GM12878 (cell line): ENCODE measurements at regions of chr12 and their contacts with region 1.

Region 1: DNA sequence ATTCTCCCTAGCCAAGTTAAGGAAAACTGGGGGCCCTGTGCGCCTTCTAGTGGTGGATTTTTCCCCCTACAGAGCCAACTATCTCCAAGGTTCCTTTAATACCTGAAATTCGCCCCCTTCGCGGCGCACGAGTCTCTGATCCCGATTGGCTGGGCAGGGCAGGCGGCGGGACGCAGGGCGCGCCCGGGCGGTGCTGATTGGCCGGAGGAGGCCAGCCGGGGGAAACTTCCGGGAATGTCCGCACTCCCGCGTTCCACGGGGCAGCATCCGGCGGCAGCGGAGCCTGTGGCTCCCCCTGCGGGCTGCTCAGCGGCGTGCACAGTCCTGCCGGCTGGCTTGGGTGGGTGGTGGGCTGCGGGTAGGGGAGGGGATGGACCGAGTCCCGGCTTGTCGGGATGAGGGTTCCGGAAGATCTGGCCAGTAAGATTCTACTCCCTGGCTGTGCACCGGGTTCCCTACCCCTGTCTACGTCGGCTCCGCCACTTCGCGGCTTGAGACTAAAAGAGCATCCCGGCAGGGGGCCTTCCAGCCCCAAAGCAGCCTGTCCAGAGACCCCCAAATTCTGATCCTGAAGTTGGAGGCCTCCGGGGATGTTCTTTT is at the start of gene NABP2:
- DNase-seq: peak; percentile 89
- ATAC-seq: peak; percentile 90
- H3K4me3 ChIP-seq: peak within 1 kb of the TSS; percentile 97
- H3K27ac ChIP-seq: peak within 1 kb of the TSS; percentile 65
- H3K4me1 ChIP-seq: 0 out of 2 replicates have a peak, but pooled peaks cover 3% of the 10 kb centered on the region
- H3K27me3 ChIP-seq: no peaks in the 10 kb centered on the region
- CTCF ChIP-seq: peak; percentile 65 to 86 (median 85)
- EP300 ChIP-seq: 0 out of 4 replicates have a peak, but pooled peaks of 1 of the 2 experiments have one; percentile 7
- POLR2A ChIP-seq: peak; percentile 78
- RAD21 ChIP-seq: peak; percentile 49; the same call in 1 of the 2 replicates
- polyA plus RNA-seq, gene NABP2: 20.7 to 29.5 TPM

Region 2: GRCh38 chr12:56206457-56207166 is 17.6 kb before region 1 on chr12:
- CTCF ChIA-PET with region 1: interaction called, 107 read pairs
- POLR2A ChIA-PET with region 1: interaction called, 24 read pairs
- RAD21 ChIA-PET with region 1: interaction called, 41 read pairs
- SMC1A ChIA-PET with region 1: interaction called, 29 read pairs
- in situ Hi-C with region 1: no loop called
- intact Hi-C with region 1: loop called (anchors 2 kb)
- DNase-seq: no peak
- ATAC-seq: peak; percentile 95
- H3K4me3 ChIP-seq: no peak overlapping the region
- H3K27ac ChIP-seq: no peak overlapping the region
- H3K4me1 ChIP-seq: no peaks in the 10 kb centered on the region
- H3K27me3 ChIP-seq: no peaks in the 10 kb centered on the region
- CTCF ChIP-seq: peak; percentile 67 to 79 (median 75)
- EP300 ChIP-seq: no peak
- POLR2A ChIP-seq: no peak; the same call in 1 of the 2 replicates
- RAD21 ChIP-seq: peak; percentile 45

Region 3: DNA sequence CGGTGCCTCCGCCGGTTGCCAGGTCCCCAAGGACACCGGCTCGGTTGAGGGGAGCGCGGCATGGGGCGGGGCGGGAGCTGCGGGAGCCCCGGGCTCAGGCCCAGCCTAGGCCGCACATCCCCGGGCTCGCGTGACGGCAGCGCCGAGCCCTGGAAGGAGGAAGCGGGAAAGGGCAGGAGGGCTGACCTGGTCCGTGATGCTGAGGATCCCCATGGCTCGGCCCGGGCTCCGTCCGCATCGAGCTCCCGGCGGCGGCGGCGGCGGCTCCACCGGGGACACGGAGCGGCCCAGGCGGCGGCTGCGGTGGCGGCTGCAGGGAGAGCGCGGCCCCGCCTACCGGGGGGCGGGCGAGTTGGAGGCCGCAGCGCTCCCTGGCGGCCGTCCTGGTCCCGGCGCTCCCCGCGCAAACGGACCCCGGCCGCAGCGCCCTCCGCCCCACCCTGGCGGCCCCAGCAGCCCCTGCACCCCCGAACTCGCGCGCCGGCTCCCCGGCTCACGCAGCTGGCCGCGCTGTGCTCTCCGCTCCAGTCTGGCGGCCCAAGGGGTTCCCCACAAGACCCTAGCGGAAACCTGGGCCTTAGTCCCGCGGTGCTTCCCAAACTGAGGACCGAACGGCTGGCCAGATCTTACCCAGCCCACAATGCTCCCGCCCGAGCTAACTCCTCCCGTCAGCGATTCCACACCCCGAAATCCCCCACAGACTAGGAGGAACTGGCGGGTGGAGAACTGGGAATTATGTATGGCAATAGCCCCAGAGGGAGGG is 34.0 kb after region 1 on chr12 and contains the start of gene ANKRD52:
- CTCF ChIA-PET with region 1: interaction called, 9 read pairs
- POLR2A ChIA-PET with region 1: interaction called, 8 read pairs
- RAD21 ChIA-PET with region 1: interaction called, 12 read pairs
- SMC1A ChIA-PET with region 1: interaction called, 5 read pairs
- in situ Hi-C with region 1: no loop called
- intact Hi-C with region 1: no loop called
- DNase-seq: no peak
- ATAC-seq: peak; percentile 98
- H3K4me3 ChIP-seq: peak within 1 kb of the TSS; percentile 95
- H3K27ac ChIP-seq: peak within 1 kb of the TSS; percentile 73
- H3K4me1 ChIP-seq: peaks cover 7% of the 10 kb centered on the region
- H3K27me3 ChIP-seq: no peaks in the 10 kb centered on the region
- CTCF ChIP-seq: peak; percentile 54 to 84 (median 57); a peak in 5 of 6 replicates
- EP300 ChIP-seq: 0 out of 4 replicates have a peak, but pooled peaks of 1 of the 2 experiments have one; percentile 12
- POLR2A ChIP-seq: peak; percentile 71
- RAD21 ChIP-seq: no peak
- polyA plus RNA-seq, gene ANKRD52: 0.90 to 1.2 TPM